PC-3 (cell line): ENCODE measurements at regions of chr11 and their contacts with region 1.

Region 1: DNA sequence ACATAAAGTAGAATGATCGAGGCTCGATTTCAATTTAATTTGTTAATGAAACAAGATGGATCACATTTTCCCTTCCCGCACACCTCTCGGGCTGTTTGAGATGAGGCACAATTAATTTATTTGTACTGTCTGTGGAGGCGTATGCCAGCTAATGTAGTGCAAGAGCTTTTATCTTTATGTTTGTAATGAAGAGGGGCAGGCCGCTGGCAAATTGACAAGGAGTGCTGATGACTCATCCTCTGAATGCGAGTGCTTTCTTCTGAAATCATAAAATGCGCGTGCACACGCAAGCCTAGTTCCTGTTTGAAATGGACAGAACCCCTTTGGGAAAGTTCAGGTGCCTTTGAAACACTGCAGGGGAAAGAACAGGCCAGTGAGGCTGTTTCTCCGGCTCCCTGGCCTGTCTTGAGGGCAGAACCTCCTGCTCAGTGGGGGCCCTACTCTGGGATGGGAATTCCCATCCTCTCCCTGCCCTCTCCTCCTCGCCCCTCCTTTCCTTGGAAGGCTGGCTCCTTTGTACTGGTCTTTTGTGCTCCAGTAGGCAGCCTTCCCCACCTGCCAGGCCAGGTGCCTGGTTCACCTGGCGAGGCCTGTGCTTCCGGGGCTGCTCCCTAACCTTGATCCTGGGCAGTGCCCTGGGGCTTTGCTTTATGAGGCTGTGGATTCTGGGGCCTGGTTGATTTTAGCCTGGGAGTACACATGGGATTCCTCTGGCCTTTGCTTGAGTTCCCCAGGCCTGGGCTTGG is 50.3 kb downstream of the TEAD1 start:
- DNase-seq: peak; percentile 96
- ATAC-seq: peak; percentile 51
- H3K4me3 ChIP-seq: peak overlapping the region; percentile 62
- H3K27ac ChIP-seq: peak overlapping the region; percentile 99
- H3K4me1 ChIP-seq: peaks cover 91% of the 10 kb centered on the region
- H3K27me3 ChIP-seq: no peaks in the 10 kb centered on the region
- CTCF ChIP-seq: no peak

Region 2: GRCh38 chr11:12769834-12770345 is 45.4 kb after region 1 on chr11:
- CTCF ChIA-PET with region 1: no interaction called
- POLR2A ChIA-PET with region 1: no interaction called
- intact Hi-C with region 1: loop called (anchors 2 kb)
- DNase-seq: peak; percentile 82
- ATAC-seq: peak; percentile 83
- H3K4me3 ChIP-seq: peak overlapping the region; percentile 5; the same call in 1 of the 2 replicates
- H3K27ac ChIP-seq: peak overlapping the region; percentile 87
- H3K4me1 ChIP-seq: peaks cover 42% of the 10 kb centered on the region
- H3K27me3 ChIP-seq: no peaks in the 10 kb centered on the region
- CTCF ChIP-seq: no peak

Region 3: GRCh38 chr11:12802418-12803085 is 78.1 kb after region 1 on chr11:
- CTCF ChIA-PET with region 1: no interaction called
- POLR2A ChIA-PET with region 1: interaction called, 5 read pairs
- intact Hi-C with region 1: loop called (anchors 2 kb)
- DNase-seq: peak; percentile 95
- ATAC-seq: peak; percentile 66
- H3K4me3 ChIP-seq: peak overlapping the region; percentile 40
- H3K27ac ChIP-seq: peak overlapping the region; percentile 93
- H3K4me1 ChIP-seq: peaks cover 60% of the 10 kb centered on the region
- H3K27me3 ChIP-seq: no peaks in the 10 kb centered on the region
- CTCF ChIP-seq: no peak

Region 4: GRCh38 chr11:12841946-12842630 is 117.6 kb after region 1 on chr11:
- CTCF ChIA-PET with region 1: no interaction called
- POLR2A ChIA-PET with region 1: no interaction called
- intact Hi-C with region 1: no loop called
- DNase-seq: peak; percentile 42
- ATAC-seq: peak; percentile 38
- H3K4me3 ChIP-seq: no peak overlapping the region
- H3K27ac ChIP-seq: peak overlapping the region; percentile 8; the same call in 1 of the 2 replicates
- H3K4me1 ChIP-seq: peaks cover 27% of the 10 kb centered on the region
- H3K27me3 ChIP-seq: no peaks in the 10 kb centered on the region
- CTCF ChIP-seq: no peak